Adrenal gland (tissue), 19 donors: ENCODE measurements at regions of chr3 and their contacts with region 1.

Region 1: DNA sequence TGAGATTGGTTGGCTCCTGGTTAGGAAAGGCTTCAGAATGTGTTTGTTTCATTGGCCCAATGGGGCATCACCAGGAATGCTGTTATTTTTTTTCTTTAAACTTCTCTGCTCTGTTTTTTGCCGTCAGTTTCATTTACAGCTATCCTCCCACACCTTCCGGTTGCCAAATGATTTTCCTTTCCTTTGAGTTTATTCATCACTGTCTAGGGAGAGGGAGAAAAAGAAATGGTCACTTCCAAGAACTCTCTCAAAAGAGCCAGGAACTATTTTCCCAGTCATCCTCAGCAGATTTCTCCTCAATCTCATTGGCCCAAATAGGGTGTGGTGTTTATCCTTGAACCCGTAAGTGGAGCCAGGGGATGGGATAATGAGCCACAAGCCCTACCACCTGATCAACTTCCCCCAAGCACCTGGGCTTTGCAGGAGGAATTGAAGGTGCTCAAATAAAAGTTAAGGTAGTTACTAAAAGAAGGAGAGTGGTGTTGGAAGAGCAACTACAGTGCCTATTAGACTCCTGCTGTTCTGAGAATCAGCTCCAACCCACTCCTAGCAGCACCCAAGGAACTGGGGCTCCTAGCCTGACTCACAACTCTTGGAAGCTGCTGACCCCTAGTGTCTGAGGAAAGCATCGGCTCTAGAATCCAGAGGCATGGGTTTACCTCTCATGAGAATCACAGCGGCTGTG is 183.8 kb upstream of the IL12A start:
- DNase-seq: peak; percentile 66 to 87 (median 71)
- H3K4me3 ChIP-seq: no peak overlapping the region
- H3K27ac ChIP-seq: no peak overlapping the region
- H3K4me1 ChIP-seq: no peaks in the 10 kb centered on the region
- H3K27me3 ChIP-seq: no peaks in the 10 kb centered on the region
- CTCF ChIP-seq: peak; percentile 52 to 85 (median 79)
- POLR2A ChIP-seq: no peak

Region 2: DNA sequence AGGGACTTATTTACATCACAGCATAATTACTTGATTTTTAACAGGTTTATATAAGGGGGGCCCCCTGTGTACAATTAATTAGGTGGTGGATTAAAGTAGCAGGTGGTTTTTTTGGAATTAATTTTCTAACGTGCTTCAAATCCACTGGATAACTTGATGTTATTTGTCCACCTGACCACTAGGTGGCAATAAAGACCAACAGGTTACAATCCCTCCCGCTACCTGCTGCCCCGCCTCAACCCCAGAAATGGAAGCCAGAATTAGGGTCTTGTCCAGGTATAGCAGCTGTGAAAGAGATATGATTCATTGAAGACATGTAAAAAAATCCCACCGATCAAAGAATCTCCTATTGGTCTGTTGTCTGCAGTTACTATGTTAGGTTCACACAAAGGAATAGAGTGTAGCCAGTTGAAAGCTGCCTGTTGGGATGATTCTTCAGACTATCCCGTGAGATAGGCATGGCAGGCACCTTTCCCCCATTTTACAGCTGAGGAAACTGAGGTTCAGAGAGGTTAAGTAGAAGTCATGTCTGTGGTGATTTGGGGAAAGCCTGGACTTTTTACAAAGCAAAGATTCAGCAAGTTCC is 959.0 kb before region 1 on chr3:
- intact Hi-C with region 1: loop called in 1 of 2 experiments (anchors 5 kb)
- DNase-seq: peak in 1 of 7 donors; percentile 16
- H3K4me3 ChIP-seq: no peak overlapping the region
- H3K27ac ChIP-seq: no peak overlapping the region
- H3K4me1 ChIP-seq: no peaks in the 10 kb centered on the region
- H3K27me3 ChIP-seq: no peaks in the 10 kb centered on the region
- CTCF ChIP-seq: peak; percentile 52 to 75 (median 64)
- POLR2A ChIP-seq: no peak

Region 3: DNA sequence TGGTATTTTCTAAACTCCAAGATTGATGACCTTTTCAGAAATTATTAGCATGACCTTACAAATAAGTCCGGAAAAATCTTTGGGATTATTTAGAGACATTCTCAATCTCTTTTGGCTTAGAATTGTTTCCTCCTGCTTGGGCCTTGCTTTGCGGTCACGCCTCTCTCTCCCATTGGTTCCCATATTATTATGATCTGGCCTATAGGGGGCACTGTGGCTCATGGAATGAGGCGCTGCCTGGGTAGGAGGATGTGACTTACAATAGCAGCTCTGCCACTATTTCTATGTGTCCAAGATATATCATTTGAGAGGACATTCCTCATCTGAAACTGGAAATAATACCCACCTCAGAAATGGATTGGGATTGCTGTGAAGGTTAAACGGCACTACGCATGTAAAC is 538.1 kb before region 1 on chr3:
- intact Hi-C with region 1: loop called (anchors 5 to 10 kb)
- DNase-seq: peak in 2 of 7 donors; percentile 4 to 26
- H3K4me3 ChIP-seq: no peak overlapping the region
- H3K27ac ChIP-seq: no peak overlapping the region
- H3K4me1 ChIP-seq: no peaks in the 10 kb centered on the region
- H3K27me3 ChIP-seq: peaks cover 3% of the 10 kb centered on the region
- CTCF ChIP-seq: peak in 1 of 6 experiments; percentile 31
- POLR2A ChIP-seq: no peak

Region 4: GRCh38 chr3:159322322-159322939 is 482.4 kb before region 1 on chr3:
- intact Hi-C with region 1: loop called in 1 of 2 experiments (anchors 10 kb)
- DNase-seq: peak; percentile 17 to 57 (median 22)
- H3K4me3 ChIP-seq: no peak overlapping the region
- H3K27ac ChIP-seq: no peak overlapping the region
- H3K4me1 ChIP-seq: no peaks in the 10 kb centered on the region
- H3K27me3 ChIP-seq: no peaks in the 10 kb centered on the region
- CTCF ChIP-seq: peak; percentile 16 to 57 (median 43)
- POLR2A ChIP-seq: no peak

Region 5: DNA sequence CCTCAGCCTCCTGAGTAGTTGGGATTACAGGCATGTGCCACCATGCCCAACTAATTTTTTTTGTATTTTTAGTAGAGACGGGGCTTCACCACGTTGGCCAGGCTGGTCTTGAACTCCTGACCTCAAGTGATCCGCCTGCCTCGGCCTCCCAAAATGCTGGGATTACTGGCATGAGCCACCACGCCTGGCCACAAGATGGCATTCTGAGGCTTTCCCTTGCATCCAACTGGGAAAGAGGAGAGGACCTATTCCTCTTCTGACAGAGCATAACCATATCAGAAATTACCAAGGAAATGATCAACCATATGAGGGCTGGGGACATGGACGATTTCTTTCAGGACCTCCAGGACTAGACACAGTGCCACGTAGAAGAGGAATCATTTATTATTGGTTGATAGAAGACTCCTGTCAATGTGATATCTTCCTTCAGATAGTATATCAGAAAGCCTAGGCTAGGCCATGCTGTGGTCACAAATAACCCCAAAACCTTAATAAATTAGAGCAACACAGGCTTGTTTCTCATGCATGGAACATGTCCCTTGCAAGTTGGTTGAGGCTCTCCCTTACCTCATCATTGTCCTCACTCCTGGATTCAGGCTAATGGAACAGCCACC is 188.5 kb before region 1 on chr3:
- intact Hi-C with region 1: loop called (anchors 10 kb)
- DNase-seq: peak in 5 of 7 donors; percentile 7 to 60 (median 14)
- H3K4me3 ChIP-seq: no peak overlapping the region
- H3K27ac ChIP-seq: no peak overlapping the region
- H3K4me1 ChIP-seq: no peaks in the 10 kb centered on the region
- H3K27me3 ChIP-seq: no peaks in the 10 kb centered on the region
- CTCF ChIP-seq: peak in 4 of 6 experiments; percentile 15 to 53 (median 44)
- POLR2A ChIP-seq: no peak